Posterior vena cava (tissue), 2 donors: ENCODE measurements at regions of chr12 and their contacts with region 1.

Region 1: GRCh38 chr12:46084666-46085631 is 94.6 kb upstream of the SCAF11 start:
- DNase-seq: no peak

Region 2: DNA sequence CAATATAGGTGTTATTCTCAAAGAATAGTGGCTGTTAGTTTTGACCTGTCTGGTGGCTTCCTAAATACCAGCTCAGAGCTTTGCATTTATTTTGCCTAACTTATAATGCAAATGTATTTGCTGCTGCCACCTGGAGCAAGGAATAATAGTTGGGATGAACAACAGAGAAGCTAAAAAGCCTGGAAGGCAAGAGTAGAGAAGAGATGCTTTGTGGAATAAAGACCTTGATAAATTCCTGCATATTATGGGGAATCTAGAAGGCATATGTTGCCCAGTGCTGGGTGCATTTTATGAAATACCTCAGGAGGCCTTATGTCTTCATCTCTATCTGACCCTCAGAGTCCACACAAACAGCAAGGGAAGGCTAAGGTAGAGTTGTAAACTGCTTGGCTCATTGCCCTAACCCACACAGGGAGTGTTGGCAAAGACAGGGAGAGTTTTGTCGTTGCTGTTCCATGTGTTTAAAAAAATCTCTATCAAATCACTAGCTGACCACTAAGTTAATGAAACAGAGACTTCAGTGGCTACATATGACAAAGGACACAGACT is 40.9 kb before region 1 on chr12:
- intact Hi-C with region 1: no loop called
- DNase-seq: no peak

Region 3: GRCh38 chr12:46492471-46493351 is 407.8 kb after region 1 on chr12:
- intact Hi-C with region 1: loop called in 1 of 2 experiments (anchors 5 kb)
- DNase-seq: no peak